Dorsolateral prefrontal cortex (tissue), 120 donors: ENCODE measurements at regions of chr14 and their contacts with region 1.

Region 1: DNA sequence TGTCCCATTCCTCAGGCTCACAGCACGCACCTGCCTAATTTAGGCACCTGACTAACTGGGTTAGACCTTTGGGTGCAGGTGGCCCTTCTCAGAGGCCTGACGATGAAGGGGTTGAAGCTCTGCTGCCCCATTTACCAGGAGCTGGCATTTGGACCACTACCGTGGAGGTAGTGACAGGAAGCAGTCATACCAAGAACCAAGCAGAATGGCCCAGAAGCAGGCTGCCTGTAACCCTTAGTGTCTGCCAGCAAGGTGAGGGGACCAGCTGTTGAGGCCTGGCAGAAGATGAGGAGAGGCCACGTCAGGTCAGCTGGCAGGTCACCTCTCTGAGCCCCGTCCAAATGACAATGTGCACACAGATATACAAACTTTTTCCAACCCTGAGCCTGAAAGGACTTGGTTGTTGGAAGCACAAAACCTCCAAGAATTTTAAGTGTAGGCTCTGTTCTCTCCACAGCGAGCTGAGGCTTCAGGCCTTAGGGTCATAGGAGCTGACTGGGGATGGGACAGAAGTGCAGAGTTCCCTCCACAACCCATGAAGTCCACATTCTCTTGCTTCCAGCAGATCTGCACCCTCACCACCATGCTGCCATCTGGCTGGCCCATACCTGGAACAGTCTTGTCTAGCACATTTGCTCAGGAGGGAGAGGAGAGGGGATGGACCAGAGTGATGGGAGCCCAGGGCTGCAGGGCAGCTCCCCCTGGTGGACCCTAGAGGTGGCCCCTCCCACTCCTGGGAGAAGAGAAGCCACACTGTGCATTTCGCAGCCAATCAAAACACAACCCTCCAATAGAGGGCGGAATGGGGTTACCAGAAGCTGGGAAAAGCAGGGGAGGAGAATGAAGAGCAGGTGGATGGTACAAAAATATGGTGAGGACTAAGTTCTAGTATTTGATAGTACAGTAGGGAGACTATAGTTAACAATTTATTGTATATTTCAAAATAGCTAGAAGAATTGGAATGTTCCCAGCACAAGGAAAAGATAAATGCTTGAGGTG is 23.3 kb downstream of the VASH1 start:
- DNase-seq: peak in 9 of 10 donors; percentile 72 to 87 (median 82)
- H3K4me3 ChIP-seq: peak overlapping the region in 1 of 59 donors; percentile 9
- H3K27ac ChIP-seq: peak overlapping the region in 56 of 59 donors; percentile 2 to 95 (median 79)
- H3K27me3 ChIP-seq: no peaks in the 10 kb centered on the region
- CTCF ChIP-seq: peak; percentile 71 to 100 (median 96)

Region 2: GRCh38 chr14:76644855-76645518 is 139.6 kb before region 1 on chr14:
- intact Hi-C with region 1: no loop called
- DNase-seq: peak in 8 of 10 donors; percentile 5 to 69 (median 44)
- H3K4me3 ChIP-seq: no peak overlapping the region
- H3K27ac ChIP-seq: no peak overlapping the region
- H3K27me3 ChIP-seq: no peaks in the 10 kb centered on the region
- CTCF ChIP-seq: peak; percentile 22 to 78 (median 60)

Region 3: DNA sequence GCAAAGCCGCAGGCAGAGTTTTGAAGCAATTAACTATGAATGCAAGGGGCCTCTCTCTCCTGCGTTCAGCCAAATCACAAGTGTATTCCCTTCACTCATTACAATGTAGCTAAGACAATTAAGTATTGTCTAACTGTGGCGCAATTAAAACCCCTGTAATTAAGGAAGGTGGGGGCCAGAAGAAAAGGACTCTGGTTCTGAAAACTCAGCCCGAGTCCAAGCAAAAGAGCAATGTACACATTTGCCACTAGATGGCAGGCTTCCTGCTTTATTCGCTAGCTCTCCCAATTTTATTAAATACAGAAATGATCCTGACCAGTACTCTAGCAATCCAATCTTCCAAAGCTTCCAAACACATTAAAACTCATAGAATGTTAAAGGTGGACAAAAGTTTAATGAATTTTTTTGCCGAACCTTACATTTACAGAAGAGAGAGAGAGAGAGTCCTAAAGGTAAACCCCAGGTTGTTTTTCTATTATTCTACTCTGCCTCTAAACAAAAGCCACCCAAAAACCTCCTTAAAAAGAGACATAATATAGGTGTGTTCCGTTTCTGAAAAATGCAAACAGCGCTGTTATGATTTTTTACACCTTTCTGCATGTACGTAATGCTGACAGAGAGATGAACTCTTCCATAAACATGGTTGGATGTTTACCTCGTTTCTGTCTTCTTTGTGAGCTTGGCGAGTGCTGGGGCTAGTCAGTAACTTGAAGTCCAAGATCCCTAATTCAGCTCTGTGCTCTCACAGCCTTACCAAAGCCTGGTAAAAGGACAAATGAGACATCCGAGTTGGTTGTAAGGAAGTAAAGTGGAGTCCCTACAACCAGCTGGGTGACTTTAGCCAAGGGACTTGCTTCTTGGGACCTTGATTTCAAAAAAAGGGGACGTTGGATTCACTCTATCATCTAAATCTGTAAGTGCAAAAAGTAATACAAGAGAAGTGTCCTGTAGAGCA is 74.2 kb before region 1 on chr14:
- intact Hi-C with region 1: loop called (anchors 1 to 2 kb)
- DNase-seq: peak in 2 of 10 donors; percentile 35 to 40
- H3K4me3 ChIP-seq: no peak overlapping the region
- H3K27ac ChIP-seq: peak overlapping the region in 5 of 59 donors; percentile 8 to 32 (median 27)
- H3K27me3 ChIP-seq: no peaks in the 10 kb centered on the region
- CTCF ChIP-seq: peak; percentile 50 to 92 (median 85)

Region 4: GRCh38 chr14:76752744-76753143 is 31.8 kb before region 1 on chr14:
- intact Hi-C with region 1: loop called in 1 of 2 experiments (anchors 2 kb)
- DNase-seq: peak in 8 of 10 donors; percentile 44 to 77 (median 71)
- H3K4me3 ChIP-seq: no peak overlapping the region
- H3K27ac ChIP-seq: peak overlapping the region in 30 of 59 donors; percentile 2 to 62 (median 39)
- H3K27me3 ChIP-seq: no peaks in the 10 kb centered on the region
- CTCF ChIP-seq: peak in 7 of 56 donors; percentile 7 to 42 (median 11)

Region 5: GRCh38 chr14:76812211-76813044 is 27.9 kb after region 1 on chr14 and contains the start of gene ANGEL1:
- intact Hi-C with region 1: loop called in 1 of 2 experiments (anchors 2 kb)
- DNase-seq: peak; percentile 88 to 96 (median 90)
- H3K4me3 ChIP-seq: peak within 1 kb of the TSS; percentile 65 to 98 (median 91)
- H3K27ac ChIP-seq: peak within 1 kb of the TSS; percentile 67 to 96 (median 90)
- H3K27me3 ChIP-seq: no peaks in the 10 kb centered on the region
- CTCF ChIP-seq: peak in 32 of 56 donors; percentile 10 to 54 (median 30)
- total RNA-seq, gene ANGEL1: 25.7 to 56.1 (median 41.1) TPM

Region 6: DNA sequence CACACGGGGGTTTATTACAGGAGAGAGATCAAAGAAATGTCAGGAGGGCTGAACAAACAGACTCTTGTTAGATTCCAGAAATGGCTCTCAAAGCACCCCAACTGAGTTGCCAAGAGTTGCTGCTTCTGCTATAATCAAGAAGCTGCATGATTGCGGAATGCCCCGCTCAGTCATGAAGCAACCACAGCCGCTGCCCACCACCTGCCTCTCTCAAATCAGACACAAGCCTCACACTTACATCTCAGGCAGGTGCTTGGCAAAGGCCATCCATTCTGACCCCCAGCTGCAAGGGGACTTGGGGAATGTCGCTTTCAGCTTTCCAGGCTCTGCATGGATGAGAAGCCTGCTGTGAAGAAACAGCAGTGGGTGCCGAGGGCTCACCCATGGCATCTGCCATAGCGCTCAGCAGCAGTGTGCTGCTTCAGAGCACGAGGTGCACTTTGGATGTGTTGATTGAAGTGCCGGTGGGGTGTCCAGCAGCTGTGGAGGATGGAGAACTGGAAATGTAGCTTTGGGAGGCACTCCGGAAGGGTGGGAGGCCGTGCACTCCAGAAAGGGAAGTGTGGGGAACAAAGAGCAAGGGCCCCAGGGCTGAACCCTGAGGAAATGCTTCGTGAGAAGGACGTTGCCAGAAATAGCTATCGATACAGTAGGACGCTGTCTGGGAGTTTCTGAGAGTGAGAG is 79.3 kb after region 1 on chr14:
- intact Hi-C with region 1: loop called in 1 of 2 experiments (anchors 2 kb)
- DNase-seq: peak in 1 of 10 donors; percentile 26
- H3K4me3 ChIP-seq: peak overlapping the region in 42 of 59 donors; percentile 0 to 55 (median 26)
- H3K27ac ChIP-seq: peak overlapping the region in 31 of 59 donors; percentile 1 to 75 (median 50)
- H3K27me3 ChIP-seq: no peaks in the 10 kb centered on the region
- CTCF ChIP-seq: no peak

Region 7: DNA sequence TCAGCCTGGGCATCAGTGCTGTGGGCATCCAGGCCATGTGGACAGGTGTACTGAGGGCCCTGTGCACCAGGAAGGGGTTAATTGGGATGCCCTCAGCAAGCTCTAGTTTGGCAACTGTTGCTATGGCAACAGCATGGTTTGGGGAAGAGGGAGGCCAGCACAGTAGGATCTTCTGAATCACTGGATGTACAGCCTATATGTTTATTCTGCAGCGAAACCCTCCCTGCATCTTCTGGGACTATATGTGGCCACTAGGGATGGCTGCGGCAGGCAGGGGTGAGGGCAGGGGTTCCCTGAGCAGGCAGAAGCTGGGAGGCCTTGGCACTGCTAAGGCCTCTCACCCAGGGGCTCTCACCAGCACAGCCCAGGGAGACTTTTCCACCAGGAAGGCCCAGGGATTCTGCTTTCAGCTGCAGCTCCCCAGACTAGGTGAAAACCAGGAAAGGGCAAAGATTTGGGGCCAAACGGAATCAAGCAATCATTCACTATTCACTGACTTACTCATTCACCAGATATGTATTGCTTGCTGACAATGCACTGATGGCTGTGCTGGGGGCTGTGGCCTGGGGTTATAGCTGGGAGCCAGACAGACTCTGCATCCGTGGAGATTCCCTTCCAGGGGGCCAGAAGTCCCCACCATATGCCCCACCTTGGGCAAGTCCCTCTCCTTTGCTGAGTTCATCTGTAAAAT is 201.1 kb after region 1 on chr14:
- intact Hi-C with region 1: no loop called
- DNase-seq: no peak
- H3K4me3 ChIP-seq: no peak overlapping the region
- H3K27ac ChIP-seq: no peak overlapping the region
- H3K27me3 ChIP-seq: no peaks in the 10 kb centered on the region
- CTCF ChIP-seq: no peak